Heart left ventricle (tissue), 16 donors: ENCODE measurements at regions of chrX and their contacts with region 1.

Region 1: GRCh38 chrX:68511255-68511654 is 12.4 kb downstream of the YIPF6 start:
- DNase-seq: peak in 2 of 5 donors; percentile 13 to 17
- ATAC-seq: peak in 2 of 4 donors; percentile 51 to 56
- H3K4me3 ChIP-seq: no peak overlapping the region
- H3K27ac ChIP-seq: no peak overlapping the region
- H3K4me1 ChIP-seq: peaks cover 0 to 21% (median 0%) of the 10 kb centered on the region in 12 donors
- H3K27me3 ChIP-seq: peaks cover 0 to 4% (median 0%) of the 10 kb centered on the region in 9 donors
- CTCF ChIP-seq: peak; percentile 63 to 93 (median 69)
- POLR2A ChIP-seq: no peak

Region 2: DNA sequence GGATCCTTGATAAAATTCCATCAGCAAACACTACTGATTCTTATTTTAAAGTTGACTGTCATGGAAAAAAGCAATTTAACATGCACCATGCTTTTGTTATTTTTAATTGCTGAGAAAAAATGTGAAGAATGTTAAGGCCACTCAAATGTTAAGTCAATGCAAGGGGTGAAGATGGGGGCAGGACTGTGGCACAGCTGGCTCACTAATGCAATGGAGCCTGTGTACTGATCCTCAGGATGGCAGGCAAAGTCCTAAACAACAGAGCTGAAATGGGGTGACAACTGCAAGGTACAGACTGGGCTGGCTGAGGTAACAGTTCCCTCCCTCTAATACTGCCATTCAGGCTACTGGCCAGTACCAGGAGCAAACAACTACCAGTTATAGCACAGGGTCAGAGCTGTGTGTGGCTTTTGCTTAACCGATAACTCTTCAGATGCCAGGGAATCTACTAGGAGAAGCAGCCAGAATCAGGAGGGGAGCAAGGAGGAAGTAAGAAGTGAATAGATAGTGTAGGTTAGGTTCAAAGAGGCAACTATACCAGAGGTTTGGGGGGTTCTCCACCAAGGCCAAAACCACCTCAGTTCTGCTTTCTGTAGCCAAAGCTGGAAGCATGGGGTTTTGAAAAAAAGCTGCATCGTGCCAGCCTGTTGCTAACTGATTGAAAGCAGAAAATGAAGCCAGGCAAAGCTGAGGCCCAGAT is 450.6 kb before region 1 on chrX:
- intact Hi-C with region 1: no loop called
- DNase-seq: no peak
- ATAC-seq: peak in 1 of 4 donors; percentile 32
- H3K4me3 ChIP-seq: no peak overlapping the region
- H3K27ac ChIP-seq: no peak overlapping the region
- H3K4me1 ChIP-seq: peaks cover 0 to 3% (median 0%) of the 10 kb centered on the region in 12 donors
- H3K27me3 ChIP-seq: no peaks in the 10 kb centered on the region
- CTCF ChIP-seq: no peak
- POLR2A ChIP-seq: no peak

Region 3: DNA sequence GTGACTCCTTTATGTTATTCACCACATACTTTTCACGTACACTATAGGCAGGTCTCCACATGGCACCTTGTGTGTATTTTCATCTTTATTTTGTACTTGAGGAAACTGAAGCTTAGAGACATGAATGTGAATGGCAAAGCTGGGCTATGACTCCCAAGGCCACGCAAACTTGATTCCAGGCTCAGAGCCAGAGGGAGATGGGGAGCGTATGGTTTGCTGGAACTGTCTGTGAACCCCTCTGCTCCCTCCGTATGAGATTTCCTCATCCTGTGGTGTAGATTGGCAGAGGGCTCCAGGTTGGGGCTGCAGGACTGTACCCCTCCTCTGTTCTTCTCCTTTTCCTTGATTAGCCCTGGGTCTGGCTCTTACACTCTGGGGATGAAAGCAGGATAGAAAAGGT is 120.1 kb after region 1 on chrX:
- intact Hi-C with region 1: no loop called
- DNase-seq: no peak
- ATAC-seq: no peak
- H3K4me3 ChIP-seq: no peak overlapping the region
- H3K27ac ChIP-seq: no peak overlapping the region
- H3K4me1 ChIP-seq: no peaks in the 10 kb centered on the region
- H3K27me3 ChIP-seq: peaks cover 0 to 4% (median 0%) of the 10 kb centered on the region in 9 donors
- CTCF ChIP-seq: no peak
- POLR2A ChIP-seq: no peak

Region 4: DNA sequence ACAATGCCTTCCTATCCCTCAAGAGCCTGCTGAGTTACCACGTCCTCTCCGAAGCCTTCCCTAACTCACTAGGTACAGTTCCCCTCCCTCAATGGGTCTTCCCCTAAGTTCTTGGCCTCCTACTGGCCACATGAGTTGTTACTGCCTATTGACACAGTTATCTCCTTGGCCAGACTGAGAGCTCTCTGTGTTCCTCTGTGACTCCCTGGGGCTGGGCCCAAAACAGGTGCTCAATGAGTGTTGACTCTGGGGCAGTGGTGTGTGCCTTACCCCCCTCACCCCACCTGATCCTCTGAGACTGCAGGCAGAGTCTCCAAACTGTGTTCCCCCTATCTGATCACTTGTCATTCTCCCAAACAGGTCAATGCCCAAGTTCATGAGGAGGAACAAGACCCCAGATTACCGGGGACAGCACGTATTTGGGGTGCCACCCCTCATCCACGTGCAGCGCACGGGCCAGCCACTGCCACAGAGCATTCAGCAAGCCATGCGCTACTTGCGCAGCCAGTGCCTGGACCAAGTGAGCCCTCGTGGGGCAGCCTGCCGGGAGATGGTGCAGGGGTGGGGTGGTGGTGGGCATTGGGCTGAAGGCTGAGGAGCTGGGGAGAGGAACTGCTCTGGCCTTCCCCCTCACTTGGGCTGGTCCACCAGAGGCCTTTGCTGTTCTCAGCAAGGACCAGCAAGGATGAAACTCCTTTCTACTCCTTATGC is 208.8 kb after region 1 on chrX:
- intact Hi-C with region 1: loop called in 3 of 10 experiments (anchors 5 to 10 kb)
- DNase-seq: no peak
- ATAC-seq: peak; percentile 15 to 60 (median 34)
- H3K4me3 ChIP-seq: no peak overlapping the region
- H3K27ac ChIP-seq: peak overlapping the region in 1 of 12 donors; percentile 22
- H3K4me1 ChIP-seq: peaks cover 0 to 7% (median 0%) of the 10 kb centered on the region in 12 donors
- H3K27me3 ChIP-seq: peaks cover 0 to 3% (median 0%) of the 10 kb centered on the region in 9 donors
- CTCF ChIP-seq: peak in 3 of 12 donors; percentile 7 to 36 (median 27)
- POLR2A ChIP-seq: no peak

Region 5: DNA sequence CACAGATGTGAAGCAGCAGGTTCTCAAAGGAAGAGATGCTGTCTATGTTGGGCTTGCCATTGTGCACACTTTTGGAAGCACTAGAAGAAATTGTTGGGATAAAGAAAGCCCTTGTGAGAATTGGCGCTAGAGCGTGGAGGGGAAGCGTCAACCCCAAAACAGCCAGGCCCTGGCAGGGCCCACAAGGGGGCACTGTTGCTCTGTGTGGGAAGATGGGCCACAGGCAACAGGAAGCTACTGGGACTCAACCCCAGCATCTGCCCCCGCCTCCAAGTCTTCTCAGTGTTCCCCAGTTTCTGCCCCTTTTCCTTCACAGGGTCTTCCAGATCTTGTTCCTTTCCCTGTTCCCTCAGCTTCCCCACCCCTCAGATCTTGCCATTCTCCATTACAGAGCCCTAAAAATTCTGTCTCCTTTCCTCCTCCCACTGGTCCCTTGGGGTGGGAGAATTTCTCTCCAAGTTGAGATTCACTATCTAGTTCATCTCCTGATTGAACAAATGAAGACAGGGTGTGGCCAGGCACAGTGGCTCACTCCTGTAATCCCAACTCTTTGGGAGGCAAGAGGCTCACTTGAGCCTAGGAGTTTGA is 221.7 kb after region 1 on chrX:
- intact Hi-C with region 1: no loop called
- DNase-seq: peak; percentile 47 to 70 (median 52)
- ATAC-seq: peak; percentile 42 to 86 (median 76)
- H3K4me3 ChIP-seq: no peak overlapping the region
- H3K27ac ChIP-seq: no peak overlapping the region
- H3K4me1 ChIP-seq: no peaks in the 10 kb centered on the region
- H3K27me3 ChIP-seq: peaks cover 0 to 35% (median 0%) of the 10 kb centered on the region in 9 donors
- CTCF ChIP-seq: peak; percentile 54 to 73 (median 68)
- POLR2A ChIP-seq: no peak